Right lobe of liver (tissue), 6 donors: ENCODE measurements at regions of chr22 and their contacts with region 1.

Region 1: GRCh38 chr22:37199760-37200108 is 11.7 kb upstream of the C1QTNF6 start:
- DNase-seq: peak; percentile 55 to 77 (median 76)
- ATAC-seq: peak; percentile 19 to 57 (median 38)
- H3K4me3 ChIP-seq: peak overlapping the region; percentile 16 to 76 (median 63)
- H3K27ac ChIP-seq: peak overlapping the region; percentile 80 to 96 (median 85)
- H3K4me1 ChIP-seq: peaks cover 0 to 47% (median 27%) of the 10 kb centered on the region in 4 donors
- H3K27me3 ChIP-seq: no peaks in the 10 kb centered on the region
- CTCF ChIP-seq: peak in 1 of 4 donors; percentile 25
- POLR2A ChIP-seq: no peak

Region 2: DNA sequence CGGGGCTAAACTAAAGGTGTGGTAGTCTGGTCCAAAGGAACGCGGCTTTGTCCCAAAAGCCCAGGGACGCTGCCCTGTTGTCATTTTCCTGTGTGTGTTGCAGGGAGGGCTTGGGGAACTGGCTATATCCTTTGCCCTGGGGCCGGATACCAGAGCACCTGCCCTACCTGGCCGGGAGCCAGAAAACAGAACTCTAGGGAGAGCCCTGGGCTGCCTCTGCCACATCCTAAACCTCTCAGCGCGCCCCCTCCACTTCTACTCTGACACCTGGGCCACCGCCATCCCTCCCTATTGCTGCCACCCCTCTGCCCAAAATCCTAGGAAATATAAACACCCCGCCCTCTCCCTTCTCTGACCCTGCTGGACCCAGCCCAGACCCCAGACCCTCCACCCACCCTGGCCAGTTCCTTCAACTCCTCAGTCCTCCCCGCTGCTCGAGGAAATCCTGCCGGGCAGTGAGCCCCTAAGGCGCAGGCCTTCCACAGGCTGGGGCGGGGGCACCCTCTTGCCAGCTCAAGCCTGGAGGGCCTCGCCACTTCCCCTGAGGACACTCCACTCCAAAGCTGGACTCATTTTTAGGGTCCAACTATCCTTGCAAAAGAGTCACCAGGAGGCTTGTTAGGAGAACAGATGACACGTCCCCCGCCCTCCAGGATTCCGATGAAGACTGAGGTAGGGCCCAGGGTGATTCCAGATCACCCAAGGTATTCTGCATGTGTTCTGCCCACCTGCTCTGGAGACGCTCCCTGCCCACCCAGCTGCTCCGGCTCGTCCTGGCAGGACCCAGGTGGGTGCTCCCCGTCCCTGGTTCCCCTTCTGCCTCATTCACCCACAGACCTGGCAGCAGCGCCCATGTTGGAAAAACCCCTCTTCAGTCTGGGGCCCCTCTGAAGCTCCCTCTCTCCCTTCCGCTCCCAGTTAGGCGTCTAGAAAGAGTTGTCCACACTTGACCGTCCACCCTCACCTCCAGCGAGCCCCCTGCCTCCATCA is 136.0 kb before region 1 on chr22:
- intact Hi-C with region 1: loop called in 1 of 2 experiments (anchors 10 kb)
- DNase-seq: peak in 2 of 3 donors; percentile 51 to 66
- ATAC-seq: peak; percentile 39 to 63 (median 55)
- H3K4me3 ChIP-seq: no peak overlapping the region
- H3K27ac ChIP-seq: no peak overlapping the region
- H3K4me1 ChIP-seq: no peaks in the 10 kb centered on the region
- H3K27me3 ChIP-seq: no peaks in the 10 kb centered on the region
- CTCF ChIP-seq: no peak
- POLR2A ChIP-seq: no peak

Region 3: GRCh38 chr22:37162221-37163095 is 37.3 kb before region 1 on chr22:
- intact Hi-C with region 1: loop called in 1 of 2 experiments (anchors 5 kb)
- DNase-seq: peak in 1 of 3 donors; percentile 2
- ATAC-seq: peak in 3 of 4 donors; percentile 3 to 27 (median 7)
- H3K4me3 ChIP-seq: no peak overlapping the region
- H3K27ac ChIP-seq: no peak overlapping the region
- H3K4me1 ChIP-seq: peaks cover 0 to 7% (median 3%) of the 10 kb centered on the region in 4 donors
- H3K27me3 ChIP-seq: no peaks in the 10 kb centered on the region
- CTCF ChIP-seq: no peak
- POLR2A ChIP-seq: no peak